ENCODE measurements at regions of chr6 and their contacts with region 1.

Region 1: DNA sequence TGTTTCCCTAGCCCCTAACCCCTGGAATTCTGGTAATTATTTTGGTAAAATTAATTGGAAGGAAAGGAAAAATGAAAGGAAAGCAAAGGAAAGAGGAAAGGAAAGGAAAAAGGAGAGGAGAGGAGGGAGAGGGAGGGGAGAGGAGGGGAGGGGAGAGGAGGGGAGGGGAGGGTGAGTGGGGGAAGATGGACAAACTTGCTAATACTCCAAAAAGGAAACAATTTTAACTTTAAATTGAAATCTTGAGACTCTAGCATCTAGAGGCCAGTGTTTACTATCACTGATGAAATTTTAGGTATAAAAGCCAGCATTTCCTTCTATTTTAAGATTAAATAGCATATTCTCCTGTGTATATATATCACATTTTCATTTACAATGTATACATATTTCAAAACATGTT is 156.5 kb downstream of the COL12A1 start:
- DNase-seq: no peak
- ATAC-seq: no peak
- H3K4me3 ChIP-seq: no peak overlapping the region
- H3K27ac ChIP-seq: no peak overlapping the region
- H3K4me1 ChIP-seq: no peaks in the 10 kb centered on the region
- H3K27me3 ChIP-seq: no peaks in the 10 kb centered on the region
- CTCF ChIP-seq: no peak
- POLR2A ChIP-seq: no peak

Region 2: GRCh38 chr6:74902089-74902488 is 147.2 kb before region 1 on chr6:
- intact Hi-C with region 1: no loop called
- DNase-seq: no peak
- ATAC-seq: no peak
- H3K4me3 ChIP-seq: no peak overlapping the region
- H3K27ac ChIP-seq: no peak overlapping the region
- H3K4me1 ChIP-seq: no peaks in the 10 kb centered on the region
- H3K27me3 ChIP-seq: no peaks in the 10 kb centered on the region
- CTCF ChIP-seq: no peak
- POLR2A ChIP-seq: no peak

Region 3: DNA sequence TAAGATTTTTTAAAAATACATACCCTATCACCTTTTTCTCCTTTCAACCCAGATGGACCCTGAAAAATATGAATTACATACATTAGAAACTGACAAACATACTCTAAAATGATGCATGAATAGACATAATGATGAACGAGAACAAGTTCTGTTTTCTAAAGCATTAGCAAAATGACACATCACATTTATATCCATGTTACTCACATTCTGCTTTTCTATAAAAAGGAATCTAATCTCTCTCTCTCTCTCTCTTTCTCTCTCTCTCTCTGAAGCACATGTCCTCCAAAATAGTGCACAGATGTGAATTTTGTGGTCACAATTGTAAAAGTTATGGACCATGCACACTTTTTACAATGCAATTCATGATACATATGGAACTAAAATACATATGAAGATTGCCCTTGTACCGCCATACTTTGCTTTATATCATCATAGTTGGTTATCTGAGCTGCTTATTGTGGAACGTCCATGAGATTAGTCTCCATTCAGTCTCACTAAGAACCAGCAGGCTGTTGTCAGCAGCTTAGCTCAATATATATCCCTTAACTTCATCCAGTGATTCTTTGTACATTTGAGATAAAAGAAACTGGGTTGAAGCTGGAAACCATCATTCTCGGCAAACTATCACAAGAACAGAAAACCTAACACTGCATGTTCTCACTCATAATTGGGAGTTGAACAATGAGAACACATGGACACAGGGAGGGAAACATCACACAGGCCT is 42.3 kb after region 1 on chr6:
- intact Hi-C with region 1: loop called in 1 of 10 experiments (anchors 2 kb)
- DNase-seq: no peak
- ATAC-seq: no peak
- H3K4me3 ChIP-seq: no peak overlapping the region
- H3K27ac ChIP-seq: no peak overlapping the region
- H3K4me1 ChIP-seq: peaks cover 0 to 10% (median 0%) of the 10 kb centered on the region in 12 donors
- H3K27me3 ChIP-seq: no peaks in the 10 kb centered on the region
- CTCF ChIP-seq: no peak
- POLR2A ChIP-seq: no peak